ENCODE measurements at regions of chr5 and their contacts with region 1.

Region 1: DNA sequence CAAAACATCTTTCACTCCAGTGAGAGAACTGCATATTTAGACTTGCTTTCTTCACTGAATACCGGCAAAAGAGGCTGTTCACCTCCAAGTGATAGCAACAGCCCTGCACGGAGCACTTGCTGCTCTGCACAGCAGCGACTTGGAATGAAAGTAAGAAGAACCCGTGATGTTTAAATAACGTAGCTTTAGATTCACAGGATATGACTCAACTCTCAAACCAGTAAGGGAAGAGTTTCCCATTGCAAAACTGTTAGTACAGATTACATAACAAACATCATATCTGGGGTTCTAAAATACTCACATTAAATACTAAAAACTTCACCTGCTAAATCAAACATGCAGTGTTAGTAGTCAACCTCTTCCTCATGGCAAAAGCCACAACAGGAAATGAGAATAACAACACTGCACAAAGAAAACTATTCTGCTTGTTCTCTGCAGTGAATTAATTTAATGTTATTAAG is 203.4 kb downstream of the MCTP1 start:
- DNase-seq: peak; percentile 64
- H3K4me3 Mint-ChIP-seq: no peak overlapping the region
- H3K27ac Mint-ChIP-seq: peak overlapping the region; percentile 24
- H3K4me1 Mint-ChIP-seq: peaks cover 13% of the 10 kb centered on the region
- H3K27me3 Mint-ChIP-seq: peaks cover 12% of the 10 kb centered on the region

Region 2: GRCh38 chr5:95022967-95023695 is 58.4 kb before region 1 on chr5:
- CTCF ChIA-PET with region 1: no interaction called
- intact Hi-C with region 1: loop called (anchors 1 kb)
- DNase-seq: no peak
- H3K4me3 Mint-ChIP-seq: no peak overlapping the region
- H3K27ac Mint-ChIP-seq: no peak overlapping the region
- H3K4me1 Mint-ChIP-seq: peaks cover 5% of the 10 kb centered on the region
- H3K27me3 Mint-ChIP-seq: peaks cover 2% of the 10 kb centered on the region

Region 3: DNA sequence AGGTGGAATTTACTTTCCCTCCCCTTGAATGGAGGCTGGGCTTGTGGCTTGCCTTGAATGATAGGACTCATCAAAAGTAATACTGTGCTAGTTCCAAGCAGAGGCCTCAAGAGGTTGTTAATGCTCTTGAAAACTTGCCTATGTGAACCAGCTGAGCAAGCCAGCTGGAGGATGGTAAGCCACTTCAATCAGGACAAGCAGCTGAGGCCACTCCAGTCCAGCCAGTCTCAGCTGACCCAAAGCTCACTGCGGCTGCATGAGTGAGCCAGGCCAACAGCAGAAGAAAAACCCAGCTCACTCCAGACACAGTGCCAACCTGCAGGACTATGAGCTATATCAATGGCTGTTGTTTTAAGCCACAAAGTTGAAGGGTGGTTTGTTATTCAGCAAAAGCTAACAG is 20.6 kb after region 1 on chr5:
- CTCF ChIA-PET with region 1: no interaction called
- intact Hi-C with region 1: no loop called
- DNase-seq: no peak
- H3K4me3 Mint-ChIP-seq: no peak overlapping the region
- H3K27ac Mint-ChIP-seq: no peak overlapping the region
- H3K4me1 Mint-ChIP-seq: no peaks in the 10 kb centered on the region
- H3K27me3 Mint-ChIP-seq: no peaks in the 10 kb centered on the region

Region 4: DNA sequence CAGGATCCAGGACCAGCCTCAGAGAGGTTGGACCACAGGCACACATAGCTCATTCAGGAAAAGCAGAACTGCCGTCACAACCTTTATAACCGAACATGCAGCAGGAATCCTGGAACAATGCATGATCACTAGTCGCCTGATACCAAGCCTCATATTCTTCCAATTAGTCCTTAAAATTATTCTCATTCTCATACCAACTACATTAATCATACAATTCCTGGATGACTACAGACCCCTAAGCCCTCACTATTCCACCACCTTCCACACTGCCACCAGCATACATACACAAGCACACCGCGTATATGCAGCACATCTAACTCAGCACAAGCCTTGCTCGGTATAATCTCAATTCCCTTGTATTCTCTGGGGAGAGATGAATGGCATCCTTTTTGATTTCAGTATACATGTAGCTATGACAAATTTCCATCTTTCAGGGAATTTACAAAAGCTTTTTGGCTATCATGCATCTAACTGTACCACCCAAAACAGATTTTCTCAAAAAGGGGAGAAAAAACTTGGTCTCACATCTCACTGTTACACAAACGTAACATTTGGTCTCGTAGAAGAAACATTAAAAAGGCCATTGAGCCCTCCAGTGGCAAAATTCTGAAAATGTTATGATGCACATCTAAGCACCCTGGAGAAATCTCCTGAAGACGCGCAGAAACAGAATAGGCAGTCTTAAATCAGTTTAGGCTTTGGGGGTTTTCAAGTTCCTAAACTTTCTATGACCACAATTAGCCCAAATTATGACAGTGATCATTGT is 157.2 kb after region 1 on chr5:
- CTCF ChIA-PET with region 1: no interaction called
- intact Hi-C with region 1: loop called (anchors 2 kb)
- DNase-seq: no peak
- H3K4me3 Mint-ChIP-seq: no peak overlapping the region
- H3K27ac Mint-ChIP-seq: no peak overlapping the region
- H3K4me1 Mint-ChIP-seq: no peaks in the 10 kb centered on the region
- H3K27me3 Mint-ChIP-seq: peaks cover 8% of the 10 kb centered on the region

Region 5: DNA sequence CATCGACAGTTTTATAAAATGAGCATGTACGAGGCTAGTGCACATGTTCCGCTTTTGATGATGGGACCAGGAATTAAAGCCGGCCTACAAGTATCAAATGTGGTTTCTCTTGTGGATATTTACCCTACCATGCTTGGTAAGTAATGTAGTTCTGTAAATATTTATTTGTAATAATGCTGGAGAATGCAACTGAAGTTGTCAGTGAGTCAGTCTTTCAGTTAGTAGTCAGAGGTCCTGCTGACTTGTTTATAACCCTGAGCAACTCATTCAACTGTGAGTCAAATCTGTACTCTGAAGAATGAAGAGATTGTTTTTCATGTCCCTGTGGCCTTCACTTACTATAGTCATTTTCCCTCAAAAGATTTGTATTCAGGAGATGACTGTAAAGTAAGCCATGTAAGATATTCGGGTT is 510.0 kb after region 1 on chr5:
- CTCF ChIA-PET with region 1: no interaction called
- intact Hi-C with region 1: loop called (anchors 1 kb)
- DNase-seq: no peak
- H3K4me3 Mint-ChIP-seq: no peak overlapping the region
- H3K27ac Mint-ChIP-seq: no peak overlapping the region
- H3K4me1 Mint-ChIP-seq: peaks cover 25% of the 10 kb centered on the region
- H3K27me3 Mint-ChIP-seq: no peaks in the 10 kb centered on the region

Measured in activated naive CD4-positive, alpha-beta T cell treated with anti-CD3 and anti-CD28 coated beads for 36 hours (primary cell).